ENCODE measurements at regions of chr4 and their contacts with region 1.

Region 1: GRCh38 chr4:108620101-108620932 is at the start of gene RPL34:
- DNase-seq: peak; percentile 87 to 99 (median 97)
- ATAC-seq: peak; percentile 97 to 98
- H3K4me3 Mint-ChIP-seq: peak within 1 kb of the TSS; percentile 89 to 98 (median 95)
- H3K27ac Mint-ChIP-seq: peak within 1 kb of the TSS; percentile 93 to 99 (median 98)
- H3K4me1 Mint-ChIP-seq: peaks cover 33 to 64% (median 58%) of the 10 kb centered on the region in 4 donors
- H3K27me3 Mint-ChIP-seq: no peaks in the 10 kb centered on the region
- polyA plus RNA-seq, gene RPL34: 5,254 to 5,901 (median 5,840) TPM

Region 2: GRCh38 chr4:108570993-108571569 is 49.2 kb before region 1 on chr4:
- POLR2A ChIA-PET with region 1: no interaction called
- DNase-seq: no peak
- ATAC-seq: no peak
- H3K4me3 Mint-ChIP-seq: peak overlapping the region in 1 of 10 donors; percentile 46
- H3K27ac Mint-ChIP-seq: peak overlapping the region in 6 of 10 donors; percentile 21 to 80 (median 51)
- H3K4me1 Mint-ChIP-seq: peaks cover 17 to 40% (median 30%) of the 10 kb centered on the region in 4 donors
- H3K27me3 Mint-ChIP-seq: no peaks in the 10 kb centered on the region

Region 3: GRCh38 chr4:108601532-108601931 is 18.8 kb before region 1 on chr4:
- POLR2A ChIA-PET with region 1: interaction called, 11 read pairs
- DNase-seq: peak in 3 of 10 donors; percentile 48 to 67 (median 51)
- ATAC-seq: peak; percentile 76 to 89
- H3K4me3 Mint-ChIP-seq: peak overlapping the region in 8 of 10 donors; percentile 5 to 63 (median 36)
- H3K27ac Mint-ChIP-seq: peak overlapping the region in 9 of 10 donors; percentile 39 to 90 (median 60)
- H3K4me1 Mint-ChIP-seq: peaks cover 4 to 26% (median 18%) of the 10 kb centered on the region in 4 donors
- H3K27me3 Mint-ChIP-seq: no peaks in the 10 kb centered on the region

Region 4: DNA sequence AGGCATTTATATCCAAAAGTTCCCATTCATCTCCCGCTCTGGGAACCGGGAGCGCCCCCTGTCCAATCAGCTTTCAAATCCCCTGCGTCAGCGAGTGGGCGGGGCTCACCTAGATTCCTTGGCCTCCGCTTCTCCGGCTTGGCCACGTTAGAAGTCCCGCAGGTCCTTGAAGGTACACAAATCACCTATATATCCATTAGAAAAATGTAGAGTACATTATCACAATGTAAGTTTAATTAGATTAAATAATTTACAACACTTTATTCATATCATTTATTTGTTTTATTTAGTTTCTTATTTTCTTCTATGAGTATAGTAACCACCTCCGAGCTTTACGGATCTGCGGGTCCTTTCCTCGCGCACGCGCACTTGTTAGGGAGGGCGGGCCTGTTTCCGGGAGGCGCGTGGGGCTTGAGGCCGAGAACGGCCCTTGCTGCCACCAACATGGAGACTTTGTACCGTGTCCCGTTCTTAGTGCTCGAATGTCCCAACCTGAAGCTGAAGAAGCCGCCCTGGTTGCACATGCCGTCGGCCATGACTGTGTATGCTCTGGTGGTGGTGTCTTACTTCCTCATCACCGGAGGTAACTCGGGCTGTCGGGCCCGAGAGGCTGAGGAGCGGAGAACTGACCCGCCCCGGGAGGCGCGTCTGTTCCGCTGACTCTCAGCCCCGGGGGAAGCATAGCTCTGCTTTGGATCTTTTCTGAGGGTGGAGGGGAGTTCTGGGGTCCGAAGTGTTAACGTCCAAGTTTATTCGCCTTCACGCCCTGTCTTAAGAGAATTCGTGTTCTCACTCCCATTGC is 30.1 kb after region 1 on chr4 and contains the start of gene OSTC:
- POLR2A ChIA-PET with region 1: interaction called, 13 read pairs
- DNase-seq: peak; percentile 82 to 97 (median 92)
- ATAC-seq: peak; percentile 89
- H3K4me3 Mint-ChIP-seq: peak within 1 kb of the TSS; percentile 92 to 98 (median 96)
- H3K27ac Mint-ChIP-seq: peak within 1 kb of the TSS; percentile 94 to 99 (median 99)
- H3K4me1 Mint-ChIP-seq: peaks cover 26 to 46% (median 39%) of the 10 kb centered on the region in 4 donors
- H3K27me3 Mint-ChIP-seq: no peaks in the 10 kb centered on the region
- polyA plus RNA-seq, gene OSTC: 102 to 125 (median 110) TPM